Thyroid gland (tissue), 4 donors: ENCODE measurements at regions of chr3 and their contacts with region 1.

Region 1: DNA sequence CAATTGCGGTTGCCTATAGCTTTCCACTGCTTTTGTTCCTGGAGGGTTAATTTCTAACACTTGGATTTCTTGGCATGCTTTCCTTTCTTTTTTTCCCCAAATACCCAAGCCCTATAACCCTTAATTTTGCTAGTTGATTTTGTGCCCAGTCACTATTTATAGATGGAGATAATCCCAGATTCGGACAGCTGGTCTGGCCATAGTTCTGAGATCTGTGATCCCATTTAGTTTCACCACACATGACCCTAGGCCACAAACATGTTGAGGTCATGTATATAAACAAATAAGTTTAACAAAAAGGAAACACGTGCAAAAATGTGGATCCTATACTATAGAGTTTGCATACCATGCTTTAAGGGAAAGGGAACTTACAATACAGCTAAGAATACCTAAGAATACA is 111.4 kb downstream of the ZMAT3 start:
- DNase-seq: no peak
- H3K4me3 ChIP-seq: no peak overlapping the region
- H3K27ac ChIP-seq: no peak overlapping the region
- H3K4me1 ChIP-seq: no peaks in the 10 kb centered on the region
- H3K27me3 ChIP-seq: no peaks in the 10 kb centered on the region
- CTCF ChIP-seq: no peak
- POLR2A ChIP-seq: no peak

Region 2: GRCh38 chr3:178436773-178437172 is 523.4 kb before region 1 on chr3:
- intact Hi-C with region 1: loop called (anchors 5 kb)
- DNase-seq: peak in 1 of 2 donors; percentile 4
- H3K4me3 ChIP-seq: no peak overlapping the region
- H3K27ac ChIP-seq: no peak overlapping the region
- H3K4me1 ChIP-seq: no peaks in the 10 kb centered on the region
- H3K27me3 ChIP-seq: no peaks in the 10 kb centered on the region
- CTCF ChIP-seq: peak; percentile 21 to 73 (median 56)
- POLR2A ChIP-seq: no peak

Region 3: DNA sequence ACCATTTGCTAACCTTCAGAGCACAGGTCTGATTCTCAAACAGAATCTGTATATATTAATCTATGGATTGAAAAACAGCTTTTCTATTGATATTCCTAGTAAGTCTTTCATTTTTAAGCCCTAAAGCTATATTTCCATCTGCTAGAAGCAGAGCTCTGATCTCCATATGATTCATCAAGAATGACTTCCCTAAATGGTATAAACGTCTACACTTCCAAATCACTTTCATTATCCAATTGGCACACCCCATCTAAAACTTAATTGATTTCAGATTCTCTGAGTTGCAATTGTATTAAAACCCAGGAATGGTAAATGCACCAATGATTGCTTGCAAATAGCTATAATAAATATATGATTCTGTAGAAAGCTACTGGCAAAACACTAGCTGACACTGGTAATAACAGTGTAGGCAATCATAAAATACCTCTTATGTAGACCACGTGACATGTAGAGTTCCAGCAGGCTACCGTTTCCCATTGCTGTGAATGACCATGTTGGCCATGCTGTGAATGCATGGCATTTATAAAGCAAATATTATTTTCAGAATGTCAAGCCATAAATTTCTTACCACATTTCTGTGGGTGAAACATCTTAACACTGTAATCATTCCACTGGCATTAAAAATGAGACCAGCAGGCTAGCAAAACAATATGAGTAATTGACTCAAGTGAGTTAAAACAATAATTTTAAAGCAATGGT is 114.6 kb before region 1 on chr3:
- intact Hi-C with region 1: no loop called
- DNase-seq: no peak
- H3K4me3 ChIP-seq: no peak overlapping the region
- H3K27ac ChIP-seq: no peak overlapping the region
- H3K4me1 ChIP-seq: peaks cover 0 to 5% of the 10 kb centered on the region in 2 donors
- H3K27me3 ChIP-seq: no peaks in the 10 kb centered on the region
- CTCF ChIP-seq: no peak
- POLR2A ChIP-seq: no peak

Region 4: DNA sequence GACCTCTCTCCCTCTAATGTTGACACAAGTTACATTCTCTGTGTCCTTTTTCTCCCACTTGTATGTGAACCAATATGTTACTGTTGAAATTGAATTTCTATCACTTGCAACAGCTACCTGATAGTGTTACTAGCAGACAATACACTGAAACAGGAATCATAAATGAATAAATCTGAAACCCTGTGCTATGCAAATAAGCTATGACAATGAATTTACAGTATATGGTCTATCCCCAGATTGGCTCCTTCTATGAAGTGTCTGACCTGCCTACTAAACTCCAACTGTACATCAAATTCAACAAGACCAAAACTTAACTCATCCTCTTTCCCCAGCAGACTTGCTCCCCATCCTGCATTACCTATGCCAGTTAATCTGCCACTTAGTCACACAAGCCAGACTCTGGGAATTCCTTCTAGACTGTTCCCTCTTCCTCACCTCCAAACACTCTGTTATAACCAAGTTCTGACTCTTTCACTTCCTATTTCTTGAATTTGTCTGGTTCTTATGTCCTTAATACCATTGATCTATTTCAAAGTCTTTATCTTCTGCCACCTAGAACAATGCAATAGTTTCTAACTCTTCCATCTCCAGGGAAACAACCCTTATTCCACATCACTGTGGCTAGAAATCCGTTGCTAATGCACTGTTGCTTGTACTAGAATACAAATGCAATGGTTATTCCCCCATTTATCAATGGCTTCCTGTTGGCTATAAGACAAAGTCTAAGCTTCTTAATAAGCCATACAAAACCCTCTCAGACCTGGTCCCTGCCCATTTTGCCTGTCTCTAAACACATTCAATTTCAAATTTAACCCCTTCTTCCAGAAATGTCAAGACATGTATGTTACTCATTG is 349.3 kb after region 1 on chr3:
- intact Hi-C with region 1: no loop called
- DNase-seq: no peak
- H3K4me3 ChIP-seq: no peak overlapping the region
- H3K27ac ChIP-seq: no peak overlapping the region
- H3K4me1 ChIP-seq: no peaks in the 10 kb centered on the region
- H3K27me3 ChIP-seq: no peaks in the 10 kb centered on the region
- CTCF ChIP-seq: no peak
- POLR2A ChIP-seq: no peak